ENCODE measurements at regions of chr1 and their contacts with region 1.

Region 1: GRCh38 chr1:25997828-25998761 is at the start of gene PAFAH2:
- DNase-seq: peak; percentile 96 to 98 (median 97)
- H3K4me3 ChIP-seq: peak within 1 kb of the TSS; percentile 69
- H3K27ac ChIP-seq: peak within 1 kb of the TSS; percentile 21 to 45
- H3K4me1 ChIP-seq: peaks cover 6% of the 10 kb centered on the region
- H3K27me3 ChIP-seq: no peaks in the 10 kb centered on the region
- CTCF ChIP-seq: peak; percentile 99
- EP300 ChIP-seq: no peak
- POLR2A ChIP-seq: peak; percentile 37
- total RNA-seq, gene PAFAH2: 4.6 to 10.2 (median 6.1) TPM

Region 2: DNA sequence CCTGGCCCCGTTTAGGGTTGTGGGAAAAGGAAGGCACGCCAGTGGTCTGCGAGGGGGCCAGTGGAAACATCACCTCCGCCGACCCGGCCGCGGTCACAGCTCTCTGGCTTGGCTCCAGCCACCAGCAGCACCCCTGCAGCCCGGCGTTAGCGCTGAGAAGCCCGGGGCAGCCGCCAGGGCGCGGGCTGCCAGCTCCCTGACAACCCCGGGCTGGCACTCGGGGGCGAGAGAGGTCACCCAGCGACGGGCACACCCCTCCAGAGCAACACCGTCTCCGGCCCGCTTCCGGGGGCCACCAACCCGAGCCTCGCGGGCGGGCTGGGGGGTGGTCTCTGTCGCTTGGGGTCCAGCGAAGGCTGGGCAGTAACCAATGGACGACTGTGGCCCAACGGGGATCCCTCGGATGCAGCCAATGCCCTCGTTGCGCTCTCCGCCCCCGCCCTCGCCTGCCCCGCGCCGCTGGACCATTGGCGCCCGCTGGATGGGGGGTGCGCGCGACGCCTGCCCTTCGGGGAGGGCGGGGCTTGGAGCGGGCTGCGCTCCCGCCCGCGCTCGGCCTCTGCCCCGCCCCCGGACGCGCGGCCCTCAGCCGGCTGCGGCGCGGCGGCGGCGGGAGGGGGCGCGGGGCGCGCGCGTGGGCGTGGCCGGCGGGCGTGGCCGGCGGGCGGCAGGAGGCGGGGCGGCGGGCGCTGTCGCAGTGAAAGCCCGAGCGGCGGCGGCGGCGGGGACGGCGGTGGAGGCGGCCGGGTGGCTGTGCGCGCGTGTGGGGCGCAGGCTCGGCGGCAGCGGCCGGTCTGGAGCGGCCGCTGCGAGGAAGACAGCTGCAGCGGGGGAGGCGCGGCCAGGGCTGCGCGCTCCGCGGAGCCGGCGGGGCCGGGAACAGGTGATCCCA is 381.8 kb before region 1 on chr1 and contains the start of gene MAN1C1:
- intact Hi-C with region 1: loop called in 1 of 4 experiments (anchors 10 kb)
- DNase-seq: peak; percentile 86 to 92 (median 90)
- H3K4me3 ChIP-seq: peak within 1 kb of the TSS; percentile 65
- H3K27ac ChIP-seq: peak within 1 kb of the TSS; percentile 60 to 81
- H3K4me1 ChIP-seq: peaks cover 11% of the 10 kb centered on the region
- H3K27me3 ChIP-seq: no peaks in the 10 kb centered on the region
- CTCF ChIP-seq: peak in 2 of 3 donors; percentile 51 to 67
- EP300 ChIP-seq: no peak
- POLR2A ChIP-seq: peak; percentile 30
- total RNA-seq, gene MAN1C1: 18.0 to 59.2 (median 41.0) TPM

Region 3: GRCh38 chr1:25796811-25797458 is 201.2 kb before region 1 on chr1:
- intact Hi-C with region 1: loop called in 1 of 4 experiments (anchors 10 kb)
- DNase-seq: peak; percentile 79 to 90 (median 89)
- H3K4me3 ChIP-seq: no peak overlapping the region
- H3K27ac ChIP-seq: no peak overlapping the region
- H3K4me1 ChIP-seq: peaks cover 5% of the 10 kb centered on the region
- H3K27me3 ChIP-seq: no peaks in the 10 kb centered on the region
- CTCF ChIP-seq: peak; percentile 69 to 74 (median 69)
- EP300 ChIP-seq: no peak
- POLR2A ChIP-seq: no peak

Region 4: DNA sequence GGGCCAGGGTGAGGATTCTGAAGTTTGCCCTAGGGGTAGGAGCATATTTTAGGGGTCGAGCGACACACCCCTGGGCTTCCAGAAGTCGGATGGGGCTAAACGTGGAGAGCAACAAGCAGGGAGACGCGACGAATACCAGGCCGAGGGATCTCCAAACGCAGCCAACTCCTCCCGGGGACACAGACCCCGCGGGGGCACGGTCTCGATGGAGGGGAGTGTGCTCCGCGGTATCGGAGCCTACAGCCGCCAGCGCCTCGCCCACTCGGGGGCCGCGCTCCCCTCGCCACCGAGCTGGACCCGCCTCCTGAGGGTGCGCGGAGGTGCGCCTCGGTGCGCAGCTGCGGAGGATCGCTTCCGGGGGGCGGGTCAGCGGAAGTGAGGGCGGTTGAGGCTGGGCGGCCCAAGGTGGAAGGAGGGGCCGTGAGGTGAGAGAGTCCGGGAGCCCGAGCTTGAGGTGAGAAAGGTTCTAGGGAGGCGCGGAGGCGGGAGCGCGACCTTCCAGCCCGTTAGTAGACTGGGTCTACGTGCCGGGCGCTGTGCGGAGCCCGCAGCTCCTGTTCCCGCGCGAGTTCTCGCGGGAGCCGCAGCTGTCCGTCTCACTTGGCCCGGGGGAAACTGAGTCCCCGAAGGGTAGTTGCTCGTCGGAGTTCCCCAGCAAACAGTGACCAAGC is 178.4 kb before region 1 on chr1 and contains the start of gene MTFR1L:
- intact Hi-C with region 1: loop called in 2 of 4 experiments (anchors 5 to 10 kb)
- DNase-seq: peak; percentile 86 to 91 (median 88)
- H3K4me3 ChIP-seq: peak within 1 kb of the TSS; percentile 99
- H3K27ac ChIP-seq: peak within 1 kb of the TSS; percentile 74 to 86
- H3K4me1 ChIP-seq: peaks cover 14% of the 10 kb centered on the region
- H3K27me3 ChIP-seq: no peaks in the 10 kb centered on the region
- CTCF ChIP-seq: no peak
- EP300 ChIP-seq: no peak
- POLR2A ChIP-seq: peak; percentile 90
- total RNA-seq, gene MTFR1L: 55.5 to 113 (median 97.4) TPM

Region 5: DNA sequence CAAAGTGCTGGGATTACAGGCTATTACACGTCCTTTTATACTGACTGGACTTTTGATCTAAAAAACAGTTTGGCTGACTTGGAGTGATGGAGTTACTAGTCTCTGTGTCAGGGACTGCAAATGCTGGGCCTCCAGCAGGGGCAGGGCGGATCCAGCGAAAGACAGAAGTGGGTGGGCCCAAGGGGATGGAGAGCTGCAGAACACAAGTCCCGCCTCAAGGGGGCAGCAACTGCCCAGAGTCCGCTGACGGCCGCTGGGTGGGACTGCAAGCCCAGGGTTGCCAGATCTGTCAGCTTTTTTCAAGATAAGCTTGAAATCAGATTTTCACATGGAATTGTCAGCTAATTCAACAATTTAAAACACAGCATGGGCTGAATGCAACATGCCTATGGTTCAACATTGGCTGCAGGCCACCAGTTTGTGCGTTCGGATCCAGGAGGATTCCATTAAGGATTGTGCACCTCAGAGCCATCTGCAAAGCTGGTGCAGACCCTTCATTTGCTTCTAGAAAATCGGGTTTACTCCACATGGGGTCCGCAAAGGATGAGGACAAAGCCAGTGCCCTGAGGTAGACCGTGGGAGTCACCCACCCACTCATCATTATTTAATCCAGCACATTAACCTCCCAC is 102.6 kb before region 1 on chr1:
- intact Hi-C with region 1: loop called in 3 of 4 experiments (anchors 5 to 10 kb)
- DNase-seq: peak; percentile 87 to 92 (median 90)
- H3K4me3 ChIP-seq: no peak overlapping the region
- H3K27ac ChIP-seq: peak overlapping the region in 1 of 2 donors; percentile 58
- H3K4me1 ChIP-seq: peaks cover 27% of the 10 kb centered on the region
- H3K27me3 ChIP-seq: no peaks in the 10 kb centered on the region
- CTCF ChIP-seq: peak; percentile 87 to 97 (median 96)
- EP300 ChIP-seq: no peak
- POLR2A ChIP-seq: no peak

Region 6: DNA sequence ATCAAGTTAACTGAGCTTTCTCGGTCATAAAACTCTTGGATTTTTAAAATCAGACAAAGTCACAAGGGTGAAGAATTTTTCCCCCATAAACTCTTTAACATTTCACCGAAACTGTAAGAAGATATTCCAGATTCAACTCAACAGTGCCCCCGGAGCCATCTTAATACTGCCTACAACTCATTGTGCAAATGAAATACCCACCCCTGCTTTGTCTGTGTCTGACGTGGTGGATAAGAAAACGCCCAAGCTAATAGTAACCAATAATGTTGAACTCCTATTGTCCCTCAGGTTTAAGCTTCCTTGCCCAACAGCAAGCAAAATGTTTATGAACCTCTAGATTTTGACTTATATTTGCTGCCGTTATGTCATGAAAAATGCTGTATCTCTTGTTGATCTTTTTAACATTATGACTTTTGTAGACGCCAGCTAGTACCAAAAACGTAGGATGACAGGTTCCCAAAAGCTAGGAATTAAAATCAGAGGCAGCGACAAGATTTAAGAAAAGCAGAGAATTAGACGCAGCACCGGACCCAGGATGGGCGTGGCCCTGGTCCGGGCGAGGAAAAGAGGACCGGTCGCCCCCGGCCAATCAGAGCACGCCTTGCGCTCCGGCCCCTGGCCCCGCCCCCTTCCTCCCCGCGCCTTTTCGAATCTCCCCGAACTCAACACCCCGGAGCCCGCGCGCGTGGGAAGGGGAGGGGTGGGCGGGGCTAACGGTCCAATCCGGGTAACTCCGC is 93.0 kb before region 1 on chr1:
- intact Hi-C with region 1: loop called in 1 of 4 experiments (anchors 5 kb)
- DNase-seq: peak; percentile 95 to 99 (median 98)
- H3K4me3 ChIP-seq: peak overlapping the region; percentile 79
- H3K27ac ChIP-seq: peak overlapping the region in 1 of 2 donors; percentile 41
- H3K4me1 ChIP-seq: no peaks in the 10 kb centered on the region
- H3K27me3 ChIP-seq: no peaks in the 10 kb centered on the region
- CTCF ChIP-seq: no peak
- EP300 ChIP-seq: no peak
- POLR2A ChIP-seq: no peak

Region 7: GRCh38 chr1:26053718-26054560 is 55.8 kb after region 1 on chr1:
- intact Hi-C with region 1: no loop called
- DNase-seq: no peak
- H3K4me3 ChIP-seq: no peak overlapping the region
- H3K27ac ChIP-seq: no peak overlapping the region
- H3K4me1 ChIP-seq: no peaks in the 10 kb centered on the region
- H3K27me3 ChIP-seq: no peaks in the 10 kb centered on the region
- CTCF ChIP-seq: no peak
- EP300 ChIP-seq: no peak
- POLR2A ChIP-seq: no peak